Naive thymus-derived CD8-positive, alpha-beta T cell (primary cell): ENCODE measurements at regions of chr7 and their contacts with region 1.

Region 1: GRCh38 chr7:4725014-4725849 is 43.1 kb downstream of the FOXK1 start:
- DNase-seq: peak; percentile 41 to 81 (median 67)
- ATAC-seq: peak; percentile 83 to 85
- H3K4me3 Mint-ChIP-seq: peak overlapping the region; percentile 82 to 97 (median 93)
- H3K27ac Mint-ChIP-seq: peak overlapping the region; percentile 93 to 99 (median 98)
- H3K4me1 Mint-ChIP-seq: peaks cover 24 to 75% (median 63%) of the 10 kb centered on the region in 4 donors
- H3K27me3 Mint-ChIP-seq: no peaks in the 10 kb centered on the region

Region 2: DNA sequence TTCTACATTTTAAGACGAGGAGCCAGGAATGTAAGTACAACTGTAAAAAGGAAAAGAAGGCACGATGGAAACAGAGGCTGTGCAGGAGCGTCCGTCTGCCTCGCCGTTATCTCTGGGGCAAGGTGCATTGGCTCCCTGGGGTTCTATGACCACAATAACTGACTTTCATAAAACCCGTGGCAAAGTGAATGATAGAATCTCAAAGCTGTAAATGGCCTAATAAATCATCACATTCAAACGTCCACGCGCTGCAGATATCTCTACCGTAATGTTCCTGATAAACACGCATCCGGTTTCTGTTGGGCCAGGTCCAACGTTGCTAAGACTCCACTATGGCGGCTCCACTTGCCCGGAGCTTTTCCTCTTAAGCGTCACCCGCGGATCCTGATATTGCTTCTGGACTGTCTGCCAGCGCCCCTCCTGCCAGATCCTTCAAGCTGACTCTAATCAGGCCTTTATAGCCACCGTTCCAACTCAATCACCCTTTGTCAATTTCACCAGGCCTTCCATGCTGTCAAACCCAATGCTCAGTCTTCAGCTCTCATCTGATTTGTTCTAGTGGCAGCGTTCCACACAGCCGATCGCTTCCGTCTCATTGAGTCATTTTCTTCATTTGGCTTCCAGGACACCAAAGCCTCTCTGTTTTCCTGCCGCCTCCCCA is 308.7 kb before region 1 on chr7:
- POLR2A ChIA-PET with region 1: no interaction called
- DNase-seq: no peak
- ATAC-seq: no peak
- H3K4me3 Mint-ChIP-seq: peak overlapping the region in 7 of 10 donors; percentile 43 to 79 (median 56)
- H3K27ac Mint-ChIP-seq: no peak overlapping the region
- H3K4me1 Mint-ChIP-seq: peaks cover 0 to 4% (median under 1%) of the 10 kb centered on the region in 4 donors
- H3K27me3 Mint-ChIP-seq: peaks cover 0 to 17% (median 14%) of the 10 kb centered on the region in 5 donors

Region 3: GRCh38 chr7:4670791-4671190 is 54.4 kb before region 1 on chr7:
- POLR2A ChIA-PET with region 1: no interaction called
- DNase-seq: no peak
- ATAC-seq: no peak
- H3K4me3 Mint-ChIP-seq: no peak overlapping the region
- H3K27ac Mint-ChIP-seq: no peak overlapping the region
- H3K4me1 Mint-ChIP-seq: no peaks in the 10 kb centered on the region
- H3K27me3 Mint-ChIP-seq: peaks cover 0 to 6% (median 0%) of the 10 kb centered on the region in 5 donors

Region 4: DNA sequence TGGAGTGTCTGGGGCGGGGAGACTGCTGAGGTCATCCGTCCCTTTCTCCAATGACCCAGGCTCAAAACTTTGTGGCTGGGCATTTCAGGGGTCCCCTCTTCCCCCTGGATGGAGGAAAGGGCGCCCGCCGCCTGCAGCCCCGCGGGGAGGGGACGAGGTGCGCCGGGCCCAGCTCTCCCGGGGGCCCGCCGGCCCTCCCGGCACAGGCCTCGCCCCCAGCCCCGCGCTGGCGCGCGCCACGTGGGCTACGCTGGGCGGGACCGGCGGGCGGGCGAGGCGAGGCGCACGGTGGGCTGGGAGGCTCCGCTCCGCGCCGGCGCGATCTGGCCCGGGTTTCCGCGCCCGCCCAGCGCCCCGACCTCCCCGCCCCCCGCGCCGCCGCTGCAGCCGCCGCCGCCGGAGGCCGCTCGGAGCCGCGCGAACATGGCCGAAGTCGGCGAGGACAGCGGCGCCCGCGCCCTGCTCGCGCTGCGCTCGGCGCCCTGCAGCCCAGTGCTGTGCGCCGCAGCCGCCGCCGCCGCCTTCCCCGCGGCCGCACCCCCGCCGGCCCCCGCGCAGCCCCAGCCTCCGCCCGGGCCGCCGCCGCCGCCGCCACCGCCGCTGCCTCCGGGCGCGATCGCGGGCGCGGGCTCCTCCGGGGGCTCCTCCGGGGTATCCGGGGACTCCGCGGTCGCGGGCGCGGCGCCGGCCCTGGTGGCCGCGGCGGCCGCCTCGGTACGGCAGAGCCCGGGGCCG is 43.2 kb before region 1 on chr7 and contains the start of gene FOXK1:
- POLR2A ChIA-PET with region 1: interaction called, 40 read pairs
- DNase-seq: peak; percentile 64 to 88 (median 80)
- ATAC-seq: peak; percentile 80 to 81
- H3K4me3 Mint-ChIP-seq: peak within 1 kb of the TSS; percentile 86 to 99 (median 98)
- H3K27ac Mint-ChIP-seq: peak within 1 kb of the TSS; percentile 91 to 100 (median 96)
- H3K4me1 Mint-ChIP-seq: peaks cover 18 to 40% (median 32%) of the 10 kb centered on the region in 4 donors
- H3K27me3 Mint-ChIP-seq: no peaks in the 10 kb centered on the region
- polyA plus RNA-seq, gene FOXK1: 2.3 to 5.6 (median 3.6) TPM

Region 5: DNA sequence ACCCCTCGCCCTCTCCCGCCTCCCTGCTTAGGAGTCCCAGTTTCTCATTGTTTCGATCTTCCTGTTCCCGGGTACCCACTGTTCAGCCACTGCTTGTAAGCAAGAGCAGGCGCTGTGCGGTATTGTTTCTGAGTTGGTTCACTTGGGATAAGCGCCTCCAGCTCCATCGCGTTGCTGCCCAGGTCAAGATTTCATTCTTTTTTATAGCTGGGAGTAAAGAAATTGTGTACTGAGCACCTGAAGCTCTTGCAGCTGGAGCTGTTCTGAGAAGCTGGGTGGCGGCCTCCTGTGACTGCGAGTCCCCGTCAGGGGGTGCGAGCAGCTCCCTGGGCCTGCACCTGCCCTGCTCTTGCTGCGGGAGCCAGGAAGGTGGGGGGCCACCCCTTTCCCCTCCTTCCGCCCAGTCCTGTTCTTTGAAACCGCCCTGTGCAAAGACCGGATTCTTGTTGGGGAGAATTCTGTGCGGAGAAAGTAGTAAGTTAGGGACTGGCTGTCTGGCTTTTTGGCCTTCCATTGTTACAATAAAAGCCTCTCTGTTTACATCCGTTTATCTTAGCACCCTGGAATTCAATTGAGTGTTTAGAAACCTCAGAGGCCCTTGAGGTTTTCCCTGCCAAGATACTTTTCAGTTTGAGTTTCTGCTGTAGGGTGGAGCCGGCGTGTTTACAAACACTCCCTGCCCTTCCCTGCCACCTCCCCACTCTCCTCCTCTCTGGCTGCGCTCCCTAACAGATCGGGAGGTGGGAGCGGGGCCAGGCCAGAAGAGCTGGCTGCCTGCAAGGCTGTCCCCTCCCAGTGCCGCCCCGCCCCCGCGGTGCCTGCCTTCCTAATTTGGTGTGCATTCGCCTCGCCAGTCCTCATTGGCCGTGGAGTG is 19.4 kb after region 1 on chr7:
- POLR2A ChIA-PET with region 1: interaction called, 61 read pairs
- DNase-seq: peak; percentile 57 to 85 (median 72)
- ATAC-seq: peak; percentile 74 to 81
- H3K4me3 Mint-ChIP-seq: peak overlapping the region; percentile 71 to 93 (median 84)
- H3K27ac Mint-ChIP-seq: peak overlapping the region; percentile 84 to 99 (median 97)
- H3K4me1 Mint-ChIP-seq: peaks cover 41 to 81% (median 79%) of the 10 kb centered on the region in 4 donors
- H3K27me3 Mint-ChIP-seq: no peaks in the 10 kb centered on the region

Region 6: DNA sequence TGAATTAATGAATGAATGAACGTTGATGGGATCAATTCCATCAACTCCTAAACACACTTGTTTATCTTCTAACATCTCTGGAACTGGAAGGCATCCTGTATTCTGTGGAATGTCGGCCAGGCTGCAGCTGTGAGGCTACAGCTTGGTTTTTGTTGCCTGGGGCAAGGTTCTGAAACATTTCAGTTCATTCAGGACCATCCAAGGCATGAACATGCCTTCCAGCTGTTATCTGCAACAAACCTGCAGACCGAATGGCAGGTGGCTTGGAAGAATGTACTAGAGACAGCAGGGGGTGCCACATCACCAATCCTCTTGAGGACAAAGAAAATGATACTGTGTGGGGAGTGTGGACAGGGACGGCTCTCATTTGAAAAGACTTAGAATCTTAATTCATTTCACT is 124.1 kb after region 1 on chr7:
- POLR2A ChIA-PET with region 1: no interaction called
- DNase-seq: peak in 4 of 10 donors; percentile 12 to 31 (median 30)
- ATAC-seq: peak; percentile 46 to 50
- H3K4me3 Mint-ChIP-seq: no peak overlapping the region
- H3K27ac Mint-ChIP-seq: no peak overlapping the region
- H3K4me1 Mint-ChIP-seq: peaks cover 0 to 6% (median 3%) of the 10 kb centered on the region in 4 donors
- H3K27me3 Mint-ChIP-seq: peaks cover 1 to 29% (median 17%) of the 10 kb centered on the region in 5 donors